Left ventricle myocardium inferior (tissue), 1 donor: ENCODE measurements at regions of chr6 and their contacts with region 1.

Region 1: DNA sequence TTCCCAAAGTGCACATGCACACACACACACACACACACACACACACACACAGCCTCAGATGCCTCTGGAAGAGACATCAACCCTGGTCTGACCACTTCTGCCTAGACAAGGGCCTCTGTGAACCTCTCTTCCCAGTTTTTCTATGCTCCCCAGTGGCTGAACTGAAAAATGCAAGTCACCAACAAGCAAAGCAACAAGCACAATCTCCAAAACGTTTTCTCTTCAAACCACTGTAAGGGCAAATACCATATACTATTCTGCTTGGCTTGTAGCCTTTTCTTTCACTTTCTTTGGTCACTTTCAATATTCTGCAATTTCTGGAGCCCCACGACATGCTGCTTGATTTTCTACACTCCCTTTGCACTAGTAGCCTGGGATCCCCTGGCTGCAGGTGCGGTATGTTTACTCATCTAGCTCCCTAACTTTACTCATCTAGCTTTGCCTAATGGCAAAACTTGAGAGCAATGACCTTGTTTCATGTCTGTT is 121.4 kb upstream of the DST start:
- DNase-seq: no peak
- H3K4me3 ChIP-seq: no peak overlapping the region
- H3K27ac ChIP-seq: peak overlapping the region; percentile 56
- H3K4me1 ChIP-seq: peaks cover 71% of the 10 kb centered on the region
- H3K27me3 ChIP-seq: no peaks in the 10 kb centered on the region
- CTCF ChIP-seq: peak; percentile 56

Region 2: GRCh38 chr6:56708810-56709597 is 55.1 kb before region 1 on chr6:
- intact Hi-C with region 1: loop called (anchors 10 kb)
- DNase-seq: no peak
- H3K4me3 ChIP-seq: no peak overlapping the region
- H3K27ac ChIP-seq: peak overlapping the region; percentile 61
- H3K4me1 ChIP-seq: peaks cover 50% of the 10 kb centered on the region
- H3K27me3 ChIP-seq: no peaks in the 10 kb centered on the region
- CTCF ChIP-seq: peak; percentile 77

Region 3: DNA sequence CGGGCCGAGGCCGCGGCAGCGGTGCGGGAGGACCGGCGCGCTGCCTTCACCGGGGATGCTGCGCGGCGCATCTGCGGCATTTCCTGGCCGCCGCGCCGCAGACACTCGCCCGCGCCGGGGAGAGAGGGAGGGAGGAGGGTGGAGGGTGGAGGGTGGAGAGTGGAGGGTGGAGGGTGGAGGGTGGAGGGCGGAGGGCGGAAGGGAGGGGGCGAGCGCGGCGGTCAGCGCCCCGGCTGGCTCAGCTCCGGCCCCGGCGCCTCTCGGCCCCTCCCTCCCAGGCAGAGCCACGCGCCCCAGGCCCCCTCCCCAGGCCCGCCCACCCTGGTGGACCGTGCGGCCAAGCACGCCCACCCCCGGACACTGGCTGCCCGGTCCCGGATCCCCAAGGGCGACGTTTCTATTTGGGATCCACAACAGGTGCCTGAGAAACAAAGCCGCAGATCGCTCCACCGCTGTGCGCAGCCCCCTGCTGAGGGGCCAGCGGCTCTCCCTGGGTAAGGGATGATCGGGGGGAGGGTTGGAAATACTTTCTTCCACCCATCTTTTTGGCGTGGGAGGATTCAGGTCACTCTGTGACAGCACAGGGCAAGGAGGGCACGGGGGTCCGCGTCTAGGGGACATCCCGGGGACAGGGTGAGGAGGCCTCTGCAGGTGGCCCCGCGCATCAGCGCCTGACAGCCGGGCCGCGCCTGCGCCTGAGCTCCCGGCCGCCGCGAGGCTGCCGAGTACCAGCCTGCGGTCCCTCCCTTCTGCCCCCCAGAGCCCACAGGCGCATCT is 79.6 kb after region 1 on chr6:
- intact Hi-C with region 1: loop called (anchors 10 kb)
- DNase-seq: peak; percentile 79
- H3K4me3 ChIP-seq: peak overlapping the region; percentile 78
- H3K27ac ChIP-seq: peak overlapping the region; percentile 94
- H3K4me1 ChIP-seq: peaks cover 50% of the 10 kb centered on the region
- H3K27me3 ChIP-seq: no peaks in the 10 kb centered on the region
- CTCF ChIP-seq: peak; percentile 76